ENCODE measurements at regions of chrX and their contacts with region 1.

Region 1: DNA sequence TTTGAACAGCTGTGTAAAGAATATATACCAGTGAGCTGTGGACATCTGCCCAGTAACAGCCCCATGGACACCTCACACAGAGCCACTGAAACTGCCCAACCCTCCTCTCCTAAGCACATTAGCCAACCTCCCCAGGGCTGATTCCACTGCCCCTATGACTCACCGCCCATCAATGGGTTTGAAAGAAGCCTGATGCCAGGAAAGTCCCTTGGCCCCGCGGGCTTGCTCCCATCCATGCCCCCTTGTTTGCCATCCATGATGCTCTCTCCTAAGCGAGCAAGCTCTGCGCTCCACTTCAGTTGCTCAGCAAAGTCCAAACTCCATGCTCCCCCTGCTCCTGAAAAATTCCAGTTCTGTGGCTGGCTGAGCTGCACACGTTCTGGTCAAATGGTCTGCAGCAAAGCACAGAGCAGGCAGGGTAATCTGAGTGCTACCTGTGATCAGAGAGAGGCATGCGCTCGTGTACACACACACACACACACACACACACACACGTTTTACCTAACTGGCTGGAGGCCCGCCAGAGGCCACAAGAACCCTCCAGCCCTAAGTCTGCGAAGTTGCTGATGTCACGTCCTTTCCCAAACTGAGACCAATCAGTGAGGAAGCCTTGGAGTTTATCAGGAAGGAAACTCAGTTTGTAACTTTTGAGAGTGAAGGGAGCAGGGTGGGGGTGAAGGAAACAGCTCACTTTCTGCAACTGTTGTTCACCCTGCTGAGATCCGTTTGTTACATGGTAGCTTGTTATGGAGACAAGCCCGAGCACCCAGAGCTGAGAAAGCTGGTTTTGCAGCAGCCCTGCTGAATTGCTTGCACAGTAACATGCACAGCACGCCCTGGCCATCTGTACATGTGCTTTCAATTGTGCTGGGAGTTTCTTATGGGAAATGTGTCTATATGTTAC is at the start of gene ASB9:
- DNase-seq: peak; percentile 93
- ATAC-seq: peak; percentile 89
- H3K4me3 ChIP-seq: peak within 1 kb of the TSS; percentile 70
- H3K27ac ChIP-seq: peak within 1 kb of the TSS; percentile 100
- H3K4me1 ChIP-seq: peaks cover 28% of the 10 kb centered on the region
- H3K27me3 ChIP-seq: no peaks in the 10 kb centered on the region
- CTCF ChIP-seq: no peak
- total RNA-seq, gene ASB9: 31.5 and 32.1 TPM in 2 replicates

Region 2: DNA sequence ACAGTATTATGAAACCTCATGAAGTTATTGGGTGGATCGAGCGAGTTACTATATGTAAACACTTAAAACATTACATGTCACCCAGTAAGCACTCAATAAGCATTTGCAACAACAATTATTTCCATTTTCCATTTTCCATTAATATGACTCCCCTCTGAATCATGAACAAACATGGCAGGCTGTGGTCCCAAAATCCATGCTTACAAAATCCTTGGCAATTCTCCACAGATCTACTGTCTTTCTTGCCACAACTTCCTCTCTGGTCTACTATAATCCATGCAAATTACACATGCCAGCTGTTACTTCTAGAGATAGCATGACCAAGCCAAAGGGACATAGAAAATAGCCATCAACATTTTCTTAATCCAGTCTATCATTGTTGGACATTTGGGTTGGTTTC is 23.6 kb after region 1 on chrX:
- CTCF ChIA-PET with region 1: no interaction called
- POLR2A ChIA-PET with region 1: no interaction called
- intact Hi-C with region 1: loop called (anchors 1 kb)
- DNase-seq: peak; percentile 86
- ATAC-seq: peak; percentile 73
- H3K4me3 ChIP-seq: peak overlapping the region; percentile 43; the same call in 1 of the 2 replicates
- H3K27ac ChIP-seq: peak overlapping the region; percentile 99
- H3K4me1 ChIP-seq: peaks cover 24% of the 10 kb centered on the region
- H3K27me3 ChIP-seq: no peaks in the 10 kb centered on the region
- CTCF ChIP-seq: no peak

Region 3: DNA sequence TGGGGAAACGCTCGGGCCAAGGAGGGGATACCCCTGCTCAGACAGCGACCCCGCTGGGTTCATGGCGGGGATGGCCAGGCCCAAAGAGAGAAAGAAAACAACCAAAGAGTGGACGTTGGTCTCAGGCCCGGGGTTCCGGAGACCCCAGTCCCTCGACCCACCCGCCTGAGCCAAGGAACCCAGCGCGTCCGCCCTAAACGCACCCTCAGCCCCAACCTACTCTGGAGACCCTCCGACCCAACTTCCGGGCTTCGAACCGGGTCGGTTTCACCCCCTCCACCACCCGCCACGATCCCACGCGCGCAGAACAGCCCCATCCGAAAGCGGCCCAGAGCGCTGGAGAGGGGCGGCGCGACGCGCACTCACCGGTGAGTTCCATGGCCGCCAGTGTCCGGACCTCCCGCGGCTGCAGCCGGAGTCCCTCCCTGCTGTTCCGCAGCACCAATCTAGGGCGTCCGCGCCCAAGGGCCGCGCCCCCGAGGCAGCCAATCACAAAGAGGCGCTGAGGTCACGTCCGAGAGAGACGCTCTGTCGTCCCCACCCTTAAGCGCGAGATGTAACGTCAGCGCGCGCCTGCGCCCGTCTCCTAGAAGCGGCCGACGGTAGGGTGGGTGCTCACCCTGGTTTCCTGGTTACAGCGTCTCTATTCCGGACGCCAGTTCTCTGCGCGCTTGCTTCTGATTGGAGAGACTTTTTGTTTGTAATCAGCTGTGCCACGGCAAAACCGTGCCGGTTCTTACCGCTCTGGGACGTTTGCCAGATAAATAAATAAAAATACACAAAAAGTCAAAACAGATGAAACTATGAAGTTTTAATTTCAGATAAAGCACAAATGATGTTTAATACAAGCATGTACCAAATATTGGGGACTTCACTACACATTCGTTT is 65.5 kb after region 1 on chrX and contains the start of gene PIGA:
- CTCF ChIA-PET with region 1: no interaction called
- POLR2A ChIA-PET with region 1: no interaction called
- intact Hi-C with region 1: loop called (anchors 2 kb)
- DNase-seq: peak; percentile 98
- ATAC-seq: peak; percentile 96
- H3K4me3 ChIP-seq: peak within 1 kb of the TSS; percentile 86
- H3K27ac ChIP-seq: peak within 1 kb of the TSS; percentile 75
- H3K4me1 ChIP-seq: peaks cover 19% of the 10 kb centered on the region
- H3K27me3 ChIP-seq: peaks cover 17% of the 10 kb centered on the region
- CTCF ChIP-seq: no peak
- total RNA-seq, gene PIGA: 11.5 and 17.9 TPM in 2 replicates

Region 4: GRCh38 chrX:15416133-15416993 is 146.5 kb after region 1 on chrX:
- CTCF ChIA-PET with region 1: no interaction called
- POLR2A ChIA-PET with region 1: no interaction called
- intact Hi-C with region 1: no loop called
- DNase-seq: no peak
- ATAC-seq: no peak
- H3K4me3 ChIP-seq: no peak overlapping the region
- H3K27ac ChIP-seq: no peak overlapping the region
- H3K4me1 ChIP-seq: no peaks in the 10 kb centered on the region
- H3K27me3 ChIP-seq: no peaks in the 10 kb centered on the region
- CTCF ChIP-seq: no peak